Activated B cell treated with CpG ODN at 0.5 μM for 24 hours (primary cell): ENCODE measurements at regions of chr9 and their contacts with region 1.

Region 1: GRCh38 chr9:133144137-133144903 is 19.4 kb downstream of the GBGT1 start:
- DNase-seq: peak; percentile 90
- ATAC-seq: peak; percentile 63
- H3K4me3 Mint-ChIP-seq: peak overlapping the region; percentile 80
- H3K27ac Mint-ChIP-seq: peak overlapping the region; percentile 86
- H3K4me1 Mint-ChIP-seq: peaks cover 63% of the 10 kb centered on the region
- H3K27me3 Mint-ChIP-seq: no peaks in the 10 kb centered on the region
- CTCF ChIP-seq: peak; percentile 43

Region 2: GRCh38 chr9:133023117-133023890 is 121.0 kb before region 1 on chr9:
- CTCF ChIA-PET with region 1: interaction called, 12 read pairs
- POLR2A ChIA-PET with region 1: no interaction called
- intact Hi-C with region 1: loop called (anchors 2 kb)
- DNase-seq: no peak
- ATAC-seq: no peak
- H3K4me3 Mint-ChIP-seq: no peak overlapping the region
- H3K27ac Mint-ChIP-seq: no peak overlapping the region
- H3K4me1 Mint-ChIP-seq: peaks cover 7% of the 10 kb centered on the region
- H3K27me3 Mint-ChIP-seq: no peaks in the 10 kb centered on the region
- CTCF ChIP-seq: no peak

Region 3: DNA sequence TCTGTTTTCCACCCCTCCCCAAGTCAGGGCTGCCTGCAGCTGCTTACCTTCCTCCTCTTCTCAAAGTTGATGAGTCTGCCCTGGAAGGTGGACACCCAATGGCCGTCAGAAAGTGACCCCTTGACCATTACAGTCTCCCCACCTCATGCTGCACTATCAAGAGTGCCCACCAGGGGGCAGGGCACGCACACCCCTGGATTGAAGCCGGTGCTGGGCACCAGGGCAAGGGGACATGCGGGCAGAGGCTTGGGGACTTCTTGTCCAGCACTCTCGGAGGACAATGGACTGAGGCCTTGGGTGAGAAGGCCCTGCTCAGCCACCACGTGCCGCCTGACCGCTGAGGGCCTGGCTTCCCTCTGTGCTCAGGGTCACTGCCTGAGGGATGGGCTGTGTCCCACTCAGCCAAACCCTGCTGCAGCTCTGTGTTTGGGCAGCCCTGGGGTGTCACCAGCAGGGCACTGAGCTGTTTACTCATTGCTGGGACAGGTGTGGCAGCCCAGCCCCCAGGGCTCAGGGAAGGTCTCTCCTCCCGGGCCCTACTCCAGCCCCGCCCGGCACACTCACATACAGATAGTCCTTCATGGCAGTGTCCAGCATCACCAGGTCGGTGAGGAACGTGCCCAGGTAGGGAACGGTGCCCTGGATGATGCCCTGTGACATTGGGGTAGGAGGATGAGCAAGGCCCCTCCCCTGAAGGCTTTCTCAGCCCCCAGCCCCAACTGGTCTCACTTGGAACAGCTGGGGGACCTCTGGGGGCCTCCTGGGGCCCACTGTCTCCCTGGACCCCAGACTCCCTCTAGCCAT is 40.9 kb before region 1 on chr9:
- CTCF ChIA-PET with region 1: interaction called, 369 read pairs
- POLR2A ChIA-PET with region 1: interaction called, 12 read pairs
- intact Hi-C with region 1: loop called (anchors 1 kb)
- DNase-seq: peak; percentile 69
- ATAC-seq: peak; percentile 90
- H3K4me3 Mint-ChIP-seq: no peak overlapping the region
- H3K27ac Mint-ChIP-seq: no peak overlapping the region
- H3K4me1 Mint-ChIP-seq: no peaks in the 10 kb centered on the region
- H3K27me3 Mint-ChIP-seq: no peaks in the 10 kb centered on the region
- CTCF ChIP-seq: peak; percentile 71

Region 4: GRCh38 chr9:133115448-133116345 is 28.6 kb before region 1 on chr9:
- CTCF ChIA-PET with region 1: interaction called, 369 read pairs
- POLR2A ChIA-PET with region 1: interaction called, 89 read pairs
- intact Hi-C with region 1: loop called (anchors 1 kb)
- DNase-seq: no peak
- ATAC-seq: peak; percentile 80
- H3K4me3 Mint-ChIP-seq: peak overlapping the region; percentile 61
- H3K27ac Mint-ChIP-seq: peak overlapping the region; percentile 83
- H3K4me1 Mint-ChIP-seq: peaks cover 75% of the 10 kb centered on the region
- H3K27me3 Mint-ChIP-seq: no peaks in the 10 kb centered on the region
- CTCF ChIP-seq: no peak

Region 5: GRCh38 chr9:133121198-133121939 is 23.0 kb before region 1 on chr9 and contains the start of gene RALGDS:
- CTCF ChIA-PET with region 1: interaction called, 369 read pairs
- POLR2A ChIA-PET with region 1: interaction called, 89 read pairs
- intact Hi-C with region 1: loop called (anchors 1 kb)
- DNase-seq: peak; percentile 86
- ATAC-seq: peak; percentile 81
- H3K4me3 Mint-ChIP-seq: peak within 1 kb of the TSS; percentile 82
- H3K27ac Mint-ChIP-seq: peak within 1 kb of the TSS; percentile 94
- H3K4me1 Mint-ChIP-seq: peaks cover 68% of the 10 kb centered on the region
- H3K27me3 Mint-ChIP-seq: no peaks in the 10 kb centered on the region
- CTCF ChIP-seq: no peak
- total RNA-seq, gene RALGDS: 21.2 and 29.2 TPM in 2 replicates

Region 6: GRCh38 chr9:133133681-133134418 is 10.5 kb before region 1 on chr9:
- CTCF ChIA-PET with region 1: interaction called, 51 read pairs
- POLR2A ChIA-PET with region 1: interaction called, 12 read pairs
- intact Hi-C with region 1: loop called (anchors 1 kb)
- DNase-seq: peak; percentile 59
- ATAC-seq: peak; percentile 79
- H3K4me3 Mint-ChIP-seq: peak overlapping the region; percentile 33
- H3K27ac Mint-ChIP-seq: peak overlapping the region; percentile 98
- H3K4me1 Mint-ChIP-seq: peaks cover 58% of the 10 kb centered on the region
- H3K27me3 Mint-ChIP-seq: no peaks in the 10 kb centered on the region
- CTCF ChIP-seq: no peak